ENCODE measurements at regions of chr6 and their contacts with region 1.

Region 1: DNA sequence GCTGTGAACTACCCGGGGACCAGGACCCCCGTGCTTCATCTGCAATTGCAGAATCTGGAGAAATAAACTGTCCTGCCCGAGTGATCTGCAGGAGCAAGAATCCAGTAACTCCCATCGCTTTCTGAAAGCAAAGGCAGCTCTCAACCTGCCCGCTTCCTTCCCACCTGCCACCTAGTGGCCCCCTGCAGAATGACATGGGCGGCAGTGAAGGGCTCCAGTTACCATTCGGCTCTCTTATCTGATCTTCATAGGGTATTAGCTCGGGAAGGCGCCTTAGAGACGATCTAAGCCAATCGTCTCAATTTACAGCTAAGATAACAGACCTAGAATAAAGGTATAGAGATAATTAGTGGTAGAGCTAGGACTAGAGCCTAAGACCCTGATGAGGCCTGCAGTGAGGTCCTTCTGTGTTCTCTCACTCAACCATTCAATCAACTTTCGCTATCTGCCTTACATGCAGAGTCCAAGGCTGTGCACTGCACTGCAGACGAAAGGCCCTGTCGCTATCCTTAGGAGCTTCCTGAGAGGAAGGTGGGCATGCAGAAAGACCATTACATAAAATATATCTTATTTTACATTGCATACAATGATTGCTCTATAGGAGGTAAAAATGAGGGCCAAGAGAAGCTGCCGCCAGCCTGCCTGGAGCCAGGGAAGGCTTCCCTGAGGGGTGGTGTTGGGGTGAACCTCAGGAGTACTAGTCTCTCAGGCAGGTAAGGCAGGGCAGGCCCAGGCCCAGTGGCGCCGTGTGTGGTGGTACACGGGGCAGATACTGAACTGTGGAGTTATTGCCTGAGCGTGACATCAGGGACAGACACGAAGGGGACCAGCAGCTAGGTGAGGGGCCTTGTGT is 7.1 kb upstream of the PSMG4 start:
- DNase-seq: peak; percentile 64 to 87 (median 78)
- ATAC-seq: peak; percentile 99
- H3K4me3 ChIP-seq: no peak overlapping the region
- H3K4me3 Mint-ChIP-seq: no peak overlapping the region
- H3K27ac ChIP-seq: no peak overlapping the region
- H3K27ac Mint-ChIP-seq: no peak overlapping the region
- H3K4me1 ChIP-seq: peaks cover 11% of the 10 kb centered on the region
- H3K4me1 Mint-ChIP-seq: peaks cover 14% of the 10 kb centered on the region
- H3K27me3 ChIP-seq: peaks cover 6 to 26% of the 10 kb centered on the region in 2 experiments
- H3K27me3 Mint-ChIP-seq: peaks cover 43% of the 10 kb centered on the region
- CTCF ChIP-seq: peak; percentile 95

Region 2: GRCh38 chr6:3125815-3126214 is 125.9 kb before region 1 on chr6:
- CTCF ChIA-PET with region 1: interaction called, 23 read pairs
- POLR2A ChIA-PET with region 1: interaction called, 4 read pairs
- intact Hi-C with region 1: loop called (anchors 1 kb)
- DNase-seq: no peak
- ATAC-seq: no peak
- H3K4me3 ChIP-seq: no peak overlapping the region
- H3K4me3 Mint-ChIP-seq: no peak overlapping the region
- H3K27ac ChIP-seq: no peak overlapping the region
- H3K27ac Mint-ChIP-seq: no peak overlapping the region
- H3K4me1 ChIP-seq: no peaks in the 10 kb centered on the region
- H3K4me1 Mint-ChIP-seq: peaks cover 4% of the 10 kb centered on the region
- H3K27me3 ChIP-seq: no peaks in the 10 kb centered on the region
- H3K27me3 Mint-ChIP-seq: no peaks in the 10 kb centered on the region
- CTCF ChIP-seq: no peak

Region 3: DNA sequence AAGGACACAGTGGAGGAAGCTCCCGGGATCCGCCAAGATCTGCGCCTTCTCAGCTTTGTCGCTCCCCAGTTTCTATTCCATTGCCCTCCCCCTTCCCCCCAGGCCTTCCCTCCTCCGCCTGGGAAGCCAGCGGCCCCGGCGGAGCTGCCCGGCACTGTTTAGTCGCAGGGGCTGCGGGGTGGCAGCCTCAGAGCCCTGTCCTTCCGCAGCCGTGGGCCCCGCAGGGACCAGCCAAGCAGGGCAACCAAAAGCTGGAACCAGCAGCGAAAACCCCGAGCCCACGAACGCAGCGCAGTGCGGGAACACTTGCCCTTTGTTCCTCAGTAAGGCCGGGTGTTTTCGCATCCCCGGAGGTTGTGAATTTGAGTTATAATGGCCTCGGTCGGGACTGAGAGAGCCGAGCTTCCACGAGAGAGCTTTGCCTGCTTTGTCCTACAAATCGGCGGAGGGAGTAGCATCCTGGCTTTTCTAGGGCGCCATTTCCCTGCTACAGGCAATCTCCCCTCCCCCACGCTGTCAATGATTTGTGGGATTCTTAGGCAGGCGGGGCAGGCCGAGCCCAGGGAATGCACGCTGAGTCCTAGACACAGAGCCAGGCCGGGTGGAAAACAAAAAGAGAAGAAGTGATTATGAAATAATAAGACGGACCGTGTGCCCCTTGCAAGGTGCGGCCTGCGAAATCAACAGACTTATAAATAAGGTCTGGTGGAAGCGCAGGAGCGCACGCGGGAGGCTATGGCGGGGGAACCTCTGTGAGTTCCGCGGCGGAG is 20.3 kb before region 1 on chr6:
- CTCF ChIA-PET with region 1: interaction called, 7 read pairs
- POLR2A ChIA-PET with region 1: interaction called, 5 read pairs
- intact Hi-C with region 1: loop called in 1 of 2 experiments (anchors 2 kb)
- DNase-seq: peak in 2 of 14 experiments; percentile 8 to 31
- ATAC-seq: no peak
- H3K4me3 ChIP-seq: no peak overlapping the region
- H3K4me3 Mint-ChIP-seq: peak overlapping the region; percentile 66
- H3K27ac ChIP-seq: no peak overlapping the region
- H3K27ac Mint-ChIP-seq: no peak overlapping the region
- H3K4me1 ChIP-seq: peaks cover 53% of the 10 kb centered on the region
- H3K4me1 Mint-ChIP-seq: peaks cover 53% of the 10 kb centered on the region
- H3K27me3 ChIP-seq: peaks cover 78 to 85% of the 10 kb centered on the region in 2 experiments
- H3K27me3 Mint-ChIP-seq: peaks cover 92% of the 10 kb centered on the region
- CTCF ChIP-seq: no peak

Measured in CD4-positive, alpha-beta T cell (primary cell).